Posterior vena cava (tissue), 2 donors: ENCODE measurements at regions of chr12 and their contacts with region 1.

Region 1: GRCh38 chr12:40552868-40553267 is 139.4 kb upstream of the CNTN1 start:
- DNase-seq: no peak

Region 2: GRCh38 chr12:40701756-40702155 is 148.9 kb after region 1 on chr12:
- intact Hi-C with region 1: loop called in 1 of 2 experiments (anchors 5 kb)
- DNase-seq: no peak